ENCODE measurements at regions of chr1 and their contacts with region 1.

Region 1: GRCh38 chr1:226069811-226070489 is 7.4 kb downstream of the H3-3A start:
- DNase-seq: no peak
- ATAC-seq: no peak
- H3K4me3 ChIP-seq: no peak overlapping the region
- H3K27ac ChIP-seq: no peak overlapping the region
- H3K4me1 ChIP-seq: peaks cover 0 to 18% of the 10 kb centered on the region in 2 experiments; a peak in 3 of 5 replicates
- H3K27me3 ChIP-seq: no peaks in the 10 kb centered on the region
- CTCF ChIP-seq: no peak
- EP300 ChIP-seq: no peak
- POLR2A ChIP-seq: no peak
- RAD21 ChIP-seq: no peak

Region 2: DNA sequence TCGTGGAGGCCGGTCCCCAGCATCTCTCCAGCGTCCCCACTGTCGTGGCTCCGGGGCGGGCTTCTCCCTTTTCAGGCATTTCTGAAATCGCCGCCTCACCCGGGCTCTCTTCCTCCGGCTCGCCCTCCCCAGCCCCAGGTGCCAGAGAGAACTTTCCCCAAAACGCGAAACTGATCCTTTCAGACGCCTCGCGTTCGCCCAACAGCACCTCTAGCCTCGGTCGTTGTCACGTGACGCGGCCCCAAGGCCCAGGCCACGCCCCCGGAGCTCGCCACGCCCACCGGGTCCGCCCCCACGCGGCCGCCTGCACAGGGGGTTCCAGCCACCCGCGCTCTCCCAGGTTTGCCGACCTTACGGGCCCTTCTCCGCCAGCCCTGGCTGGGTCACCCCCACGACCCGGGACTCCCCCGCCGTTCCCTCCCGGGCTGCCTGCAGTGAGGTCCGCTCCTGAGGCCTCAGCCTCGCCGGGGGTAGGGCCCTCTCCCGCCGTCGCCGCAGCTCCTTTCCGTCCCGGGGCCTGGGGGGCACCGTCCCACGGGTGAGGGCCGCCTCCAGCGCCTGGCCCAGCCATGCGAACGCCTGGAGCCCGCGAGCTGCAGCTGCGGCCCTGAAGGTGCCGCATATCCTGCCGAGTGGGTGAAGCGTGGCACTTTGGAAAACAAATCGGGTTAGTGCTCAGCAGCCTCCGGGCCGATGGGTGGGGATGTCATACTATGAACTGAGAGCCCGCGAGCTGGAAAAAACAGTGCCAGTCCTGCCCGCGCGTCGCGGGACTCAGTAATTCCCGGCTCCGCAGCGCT is 13.6 kb after region 1 on chr1:
- CTCF ChIA-PET with region 1: no interaction called
- POLR2A ChIA-PET with region 1: interaction called, 49 read pairs
- in situ Hi-C with region 1: no loop called
- intact Hi-C with region 1: no loop called
- DNase-seq: peak; percentile 95 to 100 (median 98)
- ATAC-seq: peak; percentile 95
- H3K4me3 ChIP-seq: peak overlapping the region; percentile 47
- H3K27ac ChIP-seq: peak overlapping the region; percentile 58
- H3K4me1 ChIP-seq: peaks cover 4 to 15% of the 10 kb centered on the region in 2 experiments; a peak in 4 of 5 replicates
- H3K27me3 ChIP-seq: no peaks in the 10 kb centered on the region
- CTCF ChIP-seq: no peak; a peak in 1 of 6 replicates
- EP300 ChIP-seq: no peak
- POLR2A ChIP-seq: peak; percentile 74
- RAD21 ChIP-seq: no peak

Measured in K562 (cell line).